GM12878 (cell line): ENCODE measurements at regions of chr7 and their contacts with region 1.

Region 1: GRCh38 chr7:55534175-55534915 is 38.0 kb downstream of the VOPP1 start:
- DNase-seq: peak; percentile 99
- ATAC-seq: peak; percentile 68
- H3K4me3 ChIP-seq: peak overlapping the region; percentile 78
- H3K27ac ChIP-seq: peak overlapping the region; percentile 100
- H3K4me1 ChIP-seq: peaks cover 84% of the 10 kb centered on the region
- H3K27me3 ChIP-seq: no peaks in the 10 kb centered on the region
- CTCF ChIP-seq: no peak
- EP300 ChIP-seq: peak; percentile 100
- POLR2A ChIP-seq: peak; percentile 85
- RAD21 ChIP-seq: peak; percentile 36

Region 2: DNA sequence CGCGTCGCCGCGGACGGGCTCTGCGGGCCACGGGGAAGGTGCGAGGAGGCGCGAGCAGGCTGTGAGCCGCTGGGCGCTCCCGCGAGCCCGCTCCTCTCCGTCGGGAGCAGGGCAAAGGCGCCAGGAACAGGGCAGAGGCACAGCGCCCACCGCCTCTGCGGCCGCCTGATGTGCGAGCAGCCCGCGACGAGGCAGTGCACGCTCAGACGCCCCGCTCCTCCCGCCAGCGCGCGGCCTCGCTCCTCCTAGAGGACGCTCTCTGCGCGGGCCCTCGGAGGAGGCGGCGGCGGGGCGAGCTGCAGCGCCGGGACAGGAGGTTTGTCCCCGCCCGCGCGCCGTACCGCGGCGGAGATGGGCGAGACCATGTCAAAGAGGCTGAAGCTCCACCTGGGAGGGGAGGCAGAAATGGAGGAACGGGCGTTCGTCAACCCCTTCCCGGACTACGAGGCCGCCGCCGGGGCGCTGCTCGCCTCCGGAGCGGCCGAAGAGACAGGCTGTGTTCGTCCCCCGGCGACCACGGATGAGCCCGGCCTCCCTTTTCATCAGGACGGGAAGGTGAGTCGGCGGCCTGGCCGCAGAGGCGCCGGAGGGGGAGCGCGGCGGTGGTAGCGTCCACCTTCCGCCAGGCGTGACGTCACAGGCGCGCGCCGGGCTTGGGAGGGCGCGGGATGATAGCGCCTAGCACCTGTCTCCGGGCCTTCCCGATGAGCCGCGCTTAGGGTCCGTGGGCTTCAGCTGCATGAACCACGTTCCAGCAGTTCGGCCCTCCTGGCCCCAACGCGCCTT is 168.5 kb before region 1 on chr7:
- CTCF ChIA-PET with region 1: no interaction called
- POLR2A ChIA-PET with region 1: interaction called, 3 read pairs
- RAD21 ChIA-PET with region 1: no interaction called
- SMC1A ChIA-PET with region 1: no interaction called
- in situ Hi-C with region 1: no loop called
- intact Hi-C with region 1: loop called (anchors 1 kb)
- DNase-seq: peak; percentile 79
- ATAC-seq: peak; percentile 90
- H3K4me3 ChIP-seq: peak overlapping the region; percentile 99
- H3K27ac ChIP-seq: peak overlapping the region; percentile 91
- H3K4me1 ChIP-seq: peaks cover 9% of the 10 kb centered on the region
- H3K27me3 ChIP-seq: no peaks in the 10 kb centered on the region
- CTCF ChIP-seq: peak in 2 of 3 experiments; percentile 30 to 32; a peak in 3 of 6 replicates
- EP300 ChIP-seq: peak in 1 of 2 experiments; percentile 22; a peak in 1 of 4 replicates
- POLR2A ChIP-seq: peak; percentile 93
- RAD21 ChIP-seq: peak; percentile 31; the same call in 1 of the 2 replicates

Region 3: GRCh38 chr7:55515569-55516279 is 18.6 kb before region 1 on chr7:
- CTCF ChIA-PET with region 1: interaction called, 67 read pairs
- POLR2A ChIA-PET with region 1: interaction called, 122 read pairs
- RAD21 ChIA-PET with region 1: interaction called, 150 read pairs
- SMC1A ChIA-PET with region 1: interaction called, 354 read pairs
- in situ Hi-C with region 1: no loop called
- intact Hi-C with region 1: loop called (anchors 1 kb)
- DNase-seq: no peak
- ATAC-seq: peak; percentile 51
- H3K4me3 ChIP-seq: peak overlapping the region; percentile 56; the same call in 1 of the 2 replicates
- H3K27ac ChIP-seq: peak overlapping the region; percentile 62
- H3K4me1 ChIP-seq: peaks cover 69% of the 10 kb centered on the region
- H3K27me3 ChIP-seq: no peaks in the 10 kb centered on the region
- CTCF ChIP-seq: no peak
- EP300 ChIP-seq: 0 out of 4 replicates have a peak, but pooled peaks of 1 of the 2 experiments have one; percentile 16
- POLR2A ChIP-seq: peak; percentile 60
- RAD21 ChIP-seq: no peak

Region 4: GRCh38 chr7:55552320-55553023 is 18.1 kb after region 1 on chr7:
- CTCF ChIA-PET with region 1: interaction called, 87 read pairs
- POLR2A ChIA-PET with region 1: interaction called, 123 read pairs
- RAD21 ChIA-PET with region 1: interaction called, 179 read pairs
- SMC1A ChIA-PET with region 1: interaction called, 128 read pairs
- in situ Hi-C with region 1: no loop called
- intact Hi-C with region 1: loop called (anchors 1 kb)
- DNase-seq: no peak
- ATAC-seq: no peak
- H3K4me3 ChIP-seq: no peak overlapping the region
- H3K27ac ChIP-seq: no peak overlapping the region
- H3K4me1 ChIP-seq: peaks cover 94% of the 10 kb centered on the region
- H3K27me3 ChIP-seq: no peaks in the 10 kb centered on the region
- CTCF ChIP-seq: no peak
- EP300 ChIP-seq: no peak
- POLR2A ChIP-seq: no peak
- RAD21 ChIP-seq: no peak

Region 5: GRCh38 chr7:55567571-55567970 is 33.2 kb after region 1 on chr7:
- CTCF ChIA-PET with region 1: interaction called, 45 read pairs
- POLR2A ChIA-PET with region 1: interaction called, 156 read pairs
- RAD21 ChIA-PET with region 1: interaction called, 245 read pairs
- SMC1A ChIA-PET with region 1: interaction called, 263 read pairs
- in situ Hi-C with region 1: no loop called
- intact Hi-C with region 1: loop called (anchors 1 kb)
- DNase-seq: no peak
- ATAC-seq: peak; percentile 16
- H3K4me3 ChIP-seq: peak overlapping the region; percentile 60
- H3K27ac ChIP-seq: peak overlapping the region; percentile 72
- H3K4me1 ChIP-seq: peaks cover 44% of the 10 kb centered on the region
- H3K27me3 ChIP-seq: no peaks in the 10 kb centered on the region
- CTCF ChIP-seq: no peak
- EP300 ChIP-seq: no peak
- POLR2A ChIP-seq: no peak
- RAD21 ChIP-seq: no peak